ENCODE measurements at regions of chr5 and their contacts with region 1.

Region 1: DNA sequence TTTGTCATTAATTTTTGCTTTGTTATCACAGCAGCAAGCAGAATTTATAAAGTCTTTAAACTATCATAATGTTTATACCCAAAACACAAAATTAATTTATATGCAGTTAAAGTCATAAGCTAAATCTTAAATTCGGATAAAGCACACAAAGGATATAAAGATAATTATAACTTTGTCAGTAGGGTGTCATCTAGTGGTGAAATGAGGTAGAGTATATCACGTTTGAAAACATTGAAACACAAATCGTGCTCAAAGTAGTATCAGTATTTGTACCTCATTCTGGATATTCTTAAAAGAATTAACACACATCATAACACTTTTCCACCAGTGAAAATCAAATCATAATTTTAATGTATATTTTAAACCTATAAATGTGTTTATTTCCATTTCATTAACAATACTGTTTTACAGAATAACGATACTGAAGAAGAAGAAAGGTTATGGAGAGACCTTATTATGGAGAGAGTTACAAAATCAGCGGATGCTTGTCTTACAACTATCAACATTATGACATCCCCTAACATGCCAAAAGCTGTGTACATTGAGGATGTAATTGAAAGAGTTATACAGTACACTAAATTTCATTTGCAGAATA is 129.5 kb downstream of the NIPBL start:
- H3K4me3 ChIP-seq: no peak overlapping the region
- H3K27ac ChIP-seq: no peak overlapping the region
- H3K4me1 ChIP-seq: peaks cover 11% of the 10 kb centered on the region; the same call in 1 of the 2 replicates
- CTCF ChIP-seq: peak; percentile 48; the same call in 1 of the 2 replicates

Region 2: GRCh38 chr5:36728697-36729543 is 277.1 kb before region 1 on chr5:
- CTCF ChIA-PET with region 1: interaction called, 44 read pairs
- POLR2A ChIA-PET with region 1: no interaction called
- H3K4me3 ChIP-seq: no peak overlapping the region
- H3K27ac ChIP-seq: no peak overlapping the region
- H3K4me1 ChIP-seq: no peaks in the 10 kb centered on the region
- CTCF ChIP-seq: no peak

Region 3: GRCh38 chr5:36734422-36734821 is 271.6 kb before region 1 on chr5:
- CTCF ChIA-PET with region 1: interaction called, 48 read pairs
- POLR2A ChIA-PET with region 1: no interaction called
- H3K4me3 ChIP-seq: no peak overlapping the region
- H3K27ac ChIP-seq: no peak overlapping the region
- H3K4me1 ChIP-seq: no peaks in the 10 kb centered on the region
- CTCF ChIP-seq: peak; percentile 38

Region 4: GRCh38 chr5:36739751-36740221 is 266.3 kb before region 1 on chr5:
- CTCF ChIA-PET with region 1: interaction called, 48 read pairs
- POLR2A ChIA-PET with region 1: interaction called, 3 read pairs
- H3K4me3 ChIP-seq: no peak overlapping the region
- H3K27ac ChIP-seq: no peak overlapping the region
- H3K4me1 ChIP-seq: peaks cover 12% of the 10 kb centered on the region
- CTCF ChIP-seq: peak; percentile 75; the same call in 1 of the 2 replicates

Region 5: DNA sequence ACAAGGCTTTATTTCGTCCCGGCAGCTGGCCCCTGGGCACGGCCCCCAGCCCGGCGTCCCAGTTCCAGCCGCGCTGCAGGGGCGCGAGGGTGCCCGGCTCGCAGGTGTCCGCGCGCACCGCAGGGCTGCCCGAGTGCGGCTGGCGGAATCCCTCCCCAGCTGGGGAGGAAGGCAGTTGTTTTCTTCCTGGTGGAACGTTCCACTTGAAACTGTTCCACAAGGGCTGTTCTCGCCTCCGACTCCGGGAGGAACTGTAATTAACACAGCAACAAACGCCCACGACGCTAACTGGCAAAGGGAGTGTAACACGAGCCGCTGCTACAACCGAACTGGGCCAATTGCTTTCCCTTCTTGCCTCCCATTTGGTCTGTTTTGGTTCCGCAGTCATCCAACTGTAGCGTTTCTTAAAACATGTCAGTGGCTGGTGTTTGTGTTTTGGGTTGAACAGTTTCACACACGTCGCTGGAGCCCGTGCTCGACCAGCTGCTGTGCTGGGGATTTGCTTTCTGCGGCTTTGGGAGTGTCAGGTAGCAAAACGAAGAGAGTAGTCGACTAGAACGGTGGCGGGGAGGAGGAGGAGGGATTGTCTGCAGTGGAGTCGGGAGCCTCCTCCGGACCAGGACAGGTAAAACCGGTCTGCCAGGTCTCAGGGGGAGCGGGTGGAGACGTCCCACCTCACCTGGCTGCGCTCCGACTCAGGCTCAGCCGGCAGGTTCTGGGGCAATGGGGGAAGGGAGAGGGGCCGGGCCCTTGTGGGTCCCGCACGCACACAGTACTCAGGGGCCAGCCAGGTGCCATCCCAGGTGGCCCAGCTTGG is 261.1 kb before region 1 on chr5:
- CTCF ChIA-PET with region 1: interaction called, 48 read pairs
- POLR2A ChIA-PET with region 1: interaction called, 3 read pairs
- H3K4me3 ChIP-seq: peak overlapping the region; percentile 65
- H3K27ac ChIP-seq: peak overlapping the region; percentile 67
- H3K4me1 ChIP-seq: peaks cover 12% of the 10 kb centered on the region
- CTCF ChIP-seq: no peak; the same call in none of the 2 replicates

Region 6: DNA sequence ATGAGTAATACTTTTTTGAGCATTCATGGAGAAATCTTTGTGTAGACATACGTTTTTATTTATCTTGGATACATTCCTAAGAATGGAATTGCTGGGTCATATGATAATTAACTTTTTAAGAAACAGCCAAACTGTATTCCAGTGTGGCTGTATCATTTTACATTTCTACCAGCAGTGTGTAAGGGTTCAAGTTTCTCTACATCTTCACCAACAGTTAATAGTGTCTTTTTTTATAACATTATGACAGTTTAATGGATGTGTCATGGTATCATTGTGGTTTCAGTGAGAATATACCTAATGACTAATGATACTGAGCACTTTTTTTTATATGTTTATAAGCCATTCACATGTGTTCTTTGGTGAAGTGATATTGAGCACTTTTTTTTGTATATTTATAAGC is 77.1 kb before region 1 on chr5:
- CTCF ChIA-PET with region 1: no interaction called
- POLR2A ChIA-PET with region 1: no interaction called
- H3K4me3 ChIP-seq: no peak overlapping the region
- H3K27ac ChIP-seq: no peak overlapping the region
- H3K4me1 ChIP-seq: peaks cover 35% of the 10 kb centered on the region
- CTCF ChIP-seq: no peak

Region 7: DNA sequence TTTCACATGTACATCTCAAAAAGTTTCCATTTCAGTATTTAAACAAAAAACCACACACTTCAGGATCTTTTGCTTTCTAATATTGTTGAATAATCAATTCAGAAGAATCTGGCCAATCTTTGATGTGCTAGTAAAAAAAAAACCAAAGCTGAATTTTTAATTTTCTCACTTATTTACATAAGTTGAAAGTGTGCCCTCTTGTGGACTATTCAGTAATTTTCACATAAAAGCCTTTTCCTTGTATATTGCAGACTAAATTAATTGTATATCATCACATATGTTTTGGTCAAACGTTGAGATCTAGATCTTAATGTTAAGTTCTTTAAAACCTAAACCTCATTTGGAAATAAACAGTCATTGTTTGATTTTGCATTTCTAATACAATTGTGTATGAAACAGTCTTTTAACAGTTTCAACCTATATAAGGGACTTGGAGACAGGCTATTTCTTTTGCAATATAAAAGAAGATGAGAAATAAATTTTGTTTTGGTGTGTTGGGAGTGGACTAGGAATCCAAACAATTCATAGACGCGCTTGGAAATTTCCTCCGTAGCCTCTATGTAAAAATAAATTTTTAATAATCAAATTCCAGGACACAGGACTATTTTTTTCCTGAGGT is 61.3 kb before region 1 on chr5:
- CTCF ChIA-PET with region 1: interaction called, 15 read pairs
- POLR2A ChIA-PET with region 1: no interaction called
- H3K4me3 ChIP-seq: no peak overlapping the region
- H3K27ac ChIP-seq: no peak overlapping the region
- H3K4me1 ChIP-seq: peaks cover 56% of the 10 kb centered on the region
- CTCF ChIP-seq: no peak

Region 8: DNA sequence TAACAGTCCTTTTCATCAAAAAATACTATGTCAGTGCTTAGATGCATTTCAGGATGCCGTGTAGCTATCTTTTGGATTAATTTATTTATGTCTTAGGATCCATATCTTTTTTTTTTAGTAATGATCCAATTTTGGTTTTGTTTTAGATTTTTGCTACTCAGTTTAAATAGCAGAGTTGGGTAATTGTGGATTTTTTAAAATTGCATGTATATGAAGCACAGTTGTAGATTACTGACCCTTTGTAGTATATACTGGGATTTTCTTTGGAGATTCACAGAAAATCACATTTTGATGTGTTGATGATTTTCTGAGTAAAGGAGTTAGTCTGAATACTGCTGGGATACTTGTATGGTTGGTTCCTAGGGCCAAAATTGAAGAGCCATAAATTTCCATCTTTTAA is 17.6 kb before region 1 on chr5:
- CTCF ChIA-PET with region 1: interaction called, 13 read pairs
- POLR2A ChIA-PET with region 1: no interaction called
- H3K4me3 ChIP-seq: no peak overlapping the region
- H3K27ac ChIP-seq: no peak overlapping the region
- H3K4me1 ChIP-seq: peaks cover 3% of the 10 kb centered on the region; the same call in 1 of the 2 replicates
- CTCF ChIP-seq: no peak

Region 9: DNA sequence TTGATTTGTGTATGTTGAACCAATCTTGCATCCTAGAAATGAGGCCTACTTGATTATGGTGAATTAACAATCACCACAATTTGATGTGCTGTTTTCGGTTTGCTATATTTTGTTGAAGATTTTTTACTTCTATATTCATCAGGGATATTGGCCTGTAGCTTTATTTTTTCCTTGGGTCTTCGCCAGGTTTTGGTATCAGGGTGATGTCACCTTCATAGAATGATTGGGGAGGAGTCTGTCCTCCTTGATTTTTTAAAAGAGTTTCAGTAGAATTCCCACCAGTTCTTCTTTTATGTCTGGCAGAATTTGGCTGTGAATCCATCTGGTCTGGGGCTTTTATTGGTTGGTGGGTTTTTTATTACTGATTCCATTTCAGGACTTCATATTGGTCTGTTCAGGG is 127.9 kb after region 1 on chr5:
- CTCF ChIA-PET with region 1: no interaction called
- POLR2A ChIA-PET with region 1: no interaction called
- H3K4me3 ChIP-seq: no peak overlapping the region
- H3K27ac ChIP-seq: no peak overlapping the region
- H3K4me1 ChIP-seq: no peaks in the 10 kb centered on the region
- CTCF ChIP-seq: no peak

Measured in HEK293 (cell line).